Activated T-helper 2 cell treated with anti-CD3 and anti-CD28 coated beads, Interferon-gamma antibody, Interleukin-2, Interleukin-4, amounts not matched to agents 10 μg/mL and 5 μg/mL and 100 μg/mL, durations not matched to agents 14 hours and 24 hours and 36 hours (primary cell): ENCODE measurements at regions of chr5 and their contacts with region 1.

Region 1: GRCh38 chr5:88826646-88827585 is 56.1 kb downstream of the MEF2C start:
- DNase-seq: no peak
- H3K4me3 Mint-ChIP-seq: no peak overlapping the region
- H3K27ac Mint-ChIP-seq: peak overlapping the region; percentile 68
- H3K4me1 Mint-ChIP-seq: peaks cover 30% of the 10 kb centered on the region
- H3K27me3 Mint-ChIP-seq: peaks cover 29% of the 10 kb centered on the region

Region 2: GRCh38 chr5:88660947-88661805 is 165.7 kb before region 1 on chr5:
- intact Hi-C with region 1: no loop called
- DNase-seq: peak; percentile 43
- H3K4me3 Mint-ChIP-seq: peak overlapping the region; percentile 70
- H3K27ac Mint-ChIP-seq: no peak overlapping the region
- H3K4me1 Mint-ChIP-seq: peaks cover 21% of the 10 kb centered on the region
- H3K27me3 Mint-ChIP-seq: peaks cover 60% of the 10 kb centered on the region

Region 3: DNA sequence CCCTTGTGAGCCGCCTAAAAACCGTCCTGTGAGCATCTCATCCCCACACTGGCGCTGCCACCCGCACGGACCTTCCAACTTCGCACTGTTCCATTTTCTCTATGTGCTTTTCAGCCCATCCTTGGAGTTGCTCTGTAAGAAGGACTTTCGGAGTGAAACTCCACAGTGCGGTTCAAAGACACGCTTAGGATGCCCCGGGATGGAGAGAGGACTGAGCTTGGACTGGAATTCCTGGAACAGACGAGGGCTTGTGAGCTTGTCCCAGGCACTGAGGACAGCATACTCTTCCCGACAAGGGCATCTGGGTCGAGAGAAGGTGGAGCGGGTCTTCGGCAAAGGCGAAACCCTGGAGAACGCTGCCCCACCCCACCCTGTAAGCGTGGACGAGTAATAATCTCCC is 131.7 kb before region 1 on chr5:
- intact Hi-C with region 1: no loop called
- DNase-seq: no peak
- H3K4me3 Mint-ChIP-seq: no peak overlapping the region
- H3K27ac Mint-ChIP-seq: no peak overlapping the region
- H3K4me1 Mint-ChIP-seq: peaks cover 7% of the 10 kb centered on the region
- H3K27me3 Mint-ChIP-seq: peaks cover 80% of the 10 kb centered on the region

Region 4: DNA sequence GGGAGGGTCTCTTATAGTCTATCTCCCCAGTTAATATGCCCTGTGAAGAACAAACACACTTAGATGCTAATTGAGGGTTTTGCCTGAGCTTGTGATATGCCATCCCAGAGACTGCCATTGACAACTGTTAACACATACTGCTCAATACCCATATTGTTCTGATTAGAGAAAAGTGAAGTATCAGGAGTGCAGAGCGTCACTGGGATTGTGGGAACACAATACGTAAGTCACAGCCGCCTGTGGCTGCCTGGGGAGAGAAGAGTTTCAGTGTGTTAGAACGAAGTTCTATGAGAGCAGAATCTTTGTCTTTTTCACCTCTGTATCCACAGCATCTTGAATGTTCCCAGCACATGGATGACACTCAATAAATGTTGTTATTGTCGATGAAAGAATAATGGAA is 54.1 kb before region 1 on chr5:
- intact Hi-C with region 1: no loop called
- DNase-seq: no peak
- H3K4me3 Mint-ChIP-seq: no peak overlapping the region
- H3K27ac Mint-ChIP-seq: no peak overlapping the region
- H3K4me1 Mint-ChIP-seq: no peaks in the 10 kb centered on the region
- H3K27me3 Mint-ChIP-seq: peaks cover 10% of the 10 kb centered on the region

Region 5: GRCh38 chr5:88785391-88786219 is 41.3 kb before region 1 on chr5:
- intact Hi-C with region 1: loop called (anchors 5 kb)
- DNase-seq: no peak
- H3K4me3 Mint-ChIP-seq: no peak overlapping the region
- H3K27ac Mint-ChIP-seq: no peak overlapping the region
- H3K4me1 Mint-ChIP-seq: peaks cover 11% of the 10 kb centered on the region
- H3K27me3 Mint-ChIP-seq: peaks cover 11% of the 10 kb centered on the region

Region 6: DNA sequence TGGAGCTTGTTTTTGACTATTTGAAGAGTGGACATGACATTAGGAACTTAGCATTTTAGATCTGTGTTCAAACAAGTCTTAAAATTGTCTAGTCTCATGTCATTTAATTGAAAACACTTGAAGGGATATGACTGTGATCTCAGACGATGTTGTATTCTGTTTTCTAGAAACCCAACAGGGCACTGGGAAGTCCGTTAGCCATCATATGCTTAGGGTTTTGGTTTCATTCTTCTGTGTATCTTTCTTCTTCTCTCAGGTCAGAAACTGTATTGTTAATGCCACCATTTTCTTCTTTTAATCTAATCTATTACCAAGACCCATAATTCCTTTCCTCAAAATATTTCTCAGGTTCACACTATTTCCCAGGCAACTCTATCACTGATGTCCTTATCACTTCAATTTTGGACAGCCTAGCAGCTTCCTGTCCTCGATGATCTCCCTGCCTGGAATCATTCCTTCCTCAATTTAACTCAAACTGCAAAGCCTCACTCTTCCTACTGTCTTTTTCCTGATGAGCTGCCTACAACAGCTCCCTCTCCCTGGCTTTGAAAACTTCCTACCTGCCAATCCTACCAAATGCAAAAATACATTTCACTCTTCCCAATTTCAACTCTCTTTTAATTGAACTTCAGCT is 21.6 kb before region 1 on chr5:
- intact Hi-C with region 1: no loop called
- DNase-seq: no peak
- H3K4me3 Mint-ChIP-seq: no peak overlapping the region
- H3K27ac Mint-ChIP-seq: no peak overlapping the region
- H3K4me1 Mint-ChIP-seq: no peaks in the 10 kb centered on the region
- H3K27me3 Mint-ChIP-seq: peaks cover 14% of the 10 kb centered on the region